GM12878 (cell line): ENCODE measurements at regions of chr1 and their contacts with region 1.

Region 1: GRCh38 chr1:113759333-113760101 is at the start of gene PHTF1:
- DNase-seq: no peak
- ATAC-seq: peak; percentile 91
- H3K4me3 ChIP-seq: peak within 1 kb of the TSS; percentile 85
- H3K27ac ChIP-seq: peak within 1 kb of the TSS; percentile 94
- H3K4me1 ChIP-seq: no peaks in the 10 kb centered on the region; the same call in 1 of the 2 replicates
- H3K27me3 ChIP-seq: no peaks in the 10 kb centered on the region
- CTCF ChIP-seq: no peak
- EP300 ChIP-seq: no peak
- POLR2A ChIP-seq: peak; percentile 89
- RAD21 ChIP-seq: no peak
- polyA plus RNA-seq, gene PHTF1: 7.8 to 12.6 TPM

Region 2: GRCh38 chr1:113701429-113701828 is 58.1 kb before region 1 on chr1:
- CTCF ChIA-PET with region 1: no interaction called
- POLR2A ChIA-PET with region 1: no interaction called
- RAD21 ChIA-PET with region 1: no interaction called
- SMC1A ChIA-PET with region 1: no interaction called
- in situ Hi-C with region 1: no loop called
- intact Hi-C with region 1: no loop called
- DNase-seq: no peak
- ATAC-seq: no peak
- H3K4me3 ChIP-seq: no peak overlapping the region
- H3K27ac ChIP-seq: no peak overlapping the region
- H3K4me1 ChIP-seq: no peaks in the 10 kb centered on the region
- H3K27me3 ChIP-seq: no peaks in the 10 kb centered on the region
- CTCF ChIP-seq: no peak
- EP300 ChIP-seq: no peak
- POLR2A ChIP-seq: no peak
- RAD21 ChIP-seq: no peak

Region 3: GRCh38 chr1:113714606-113715275 is 44.8 kb before region 1 on chr1:
- CTCF ChIA-PET with region 1: no interaction called
- POLR2A ChIA-PET with region 1: no interaction called
- RAD21 ChIA-PET with region 1: no interaction called
- SMC1A ChIA-PET with region 1: no interaction called
- in situ Hi-C with region 1: no loop called
- intact Hi-C with region 1: no loop called
- DNase-seq: no peak
- ATAC-seq: no peak
- H3K4me3 ChIP-seq: no peak overlapping the region
- H3K27ac ChIP-seq: no peak overlapping the region
- H3K4me1 ChIP-seq: no peaks in the 10 kb centered on the region
- H3K27me3 ChIP-seq: no peaks in the 10 kb centered on the region
- CTCF ChIP-seq: no peak
- EP300 ChIP-seq: no peak
- POLR2A ChIP-seq: no peak
- RAD21 ChIP-seq: no peak

Region 4: DNA sequence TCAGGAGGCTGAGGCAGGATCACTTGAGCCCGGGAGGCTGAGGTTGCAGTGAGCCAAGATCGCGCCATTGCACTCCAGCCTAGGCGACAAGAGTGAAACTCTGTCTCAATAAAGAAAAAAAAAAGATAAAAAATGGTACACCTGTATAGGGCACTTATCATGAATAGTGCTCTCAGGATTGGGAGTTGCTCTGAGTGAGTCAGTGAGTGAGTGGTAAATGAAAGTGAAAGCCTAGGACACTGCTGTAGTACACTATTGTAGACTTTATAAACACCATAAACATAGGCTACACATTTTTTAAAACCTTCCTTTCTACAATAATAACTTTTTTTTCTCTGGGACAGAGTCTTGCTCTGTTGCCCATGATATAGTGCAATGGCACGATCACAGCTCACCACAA is 17.0 kb before region 1 on chr1:
- CTCF ChIA-PET with region 1: interaction called, 6 read pairs
- POLR2A ChIA-PET with region 1: interaction called, 4 read pairs
- RAD21 ChIA-PET with region 1: interaction called, 5 read pairs
- SMC1A ChIA-PET with region 1: interaction called, 10 read pairs
- in situ Hi-C with region 1: no loop called
- intact Hi-C with region 1: no loop called
- DNase-seq: no peak
- ATAC-seq: peak; percentile 90
- H3K4me3 ChIP-seq: no peak overlapping the region
- H3K27ac ChIP-seq: no peak overlapping the region; the same call in 1 of the 2 replicates
- H3K4me1 ChIP-seq: peaks cover 3% of the 10 kb centered on the region; the same call in 1 of the 2 replicates
- H3K27me3 ChIP-seq: no peaks in the 10 kb centered on the region
- CTCF ChIP-seq: no peak
- EP300 ChIP-seq: no peak
- POLR2A ChIP-seq: no peak
- RAD21 ChIP-seq: no peak

Region 5: GRCh38 chr1:113793878-113794834 is 34.6 kb after region 1 on chr1:
- CTCF ChIA-PET with region 1: interaction called, 4 read pairs
- POLR2A ChIA-PET with region 1: interaction called, 8 read pairs
- RAD21 ChIA-PET with region 1: interaction called, 39 read pairs
- SMC1A ChIA-PET with region 1: interaction called, 17 read pairs
- in situ Hi-C with region 1: no loop called
- intact Hi-C with region 1: loop called (anchors 5 kb)
- DNase-seq: no peak
- ATAC-seq: peak; percentile 84
- H3K4me3 ChIP-seq: no peak overlapping the region
- H3K27ac ChIP-seq: no peak overlapping the region
- H3K4me1 ChIP-seq: peaks cover 10% of the 10 kb centered on the region
- H3K27me3 ChIP-seq: no peaks in the 10 kb centered on the region
- CTCF ChIP-seq: no peak
- EP300 ChIP-seq: 0 out of 4 replicates have a peak, but pooled peaks of 1 of the 2 experiments have one; percentile 23
- POLR2A ChIP-seq: no peak
- RAD21 ChIP-seq: no peak

Region 6: DNA sequence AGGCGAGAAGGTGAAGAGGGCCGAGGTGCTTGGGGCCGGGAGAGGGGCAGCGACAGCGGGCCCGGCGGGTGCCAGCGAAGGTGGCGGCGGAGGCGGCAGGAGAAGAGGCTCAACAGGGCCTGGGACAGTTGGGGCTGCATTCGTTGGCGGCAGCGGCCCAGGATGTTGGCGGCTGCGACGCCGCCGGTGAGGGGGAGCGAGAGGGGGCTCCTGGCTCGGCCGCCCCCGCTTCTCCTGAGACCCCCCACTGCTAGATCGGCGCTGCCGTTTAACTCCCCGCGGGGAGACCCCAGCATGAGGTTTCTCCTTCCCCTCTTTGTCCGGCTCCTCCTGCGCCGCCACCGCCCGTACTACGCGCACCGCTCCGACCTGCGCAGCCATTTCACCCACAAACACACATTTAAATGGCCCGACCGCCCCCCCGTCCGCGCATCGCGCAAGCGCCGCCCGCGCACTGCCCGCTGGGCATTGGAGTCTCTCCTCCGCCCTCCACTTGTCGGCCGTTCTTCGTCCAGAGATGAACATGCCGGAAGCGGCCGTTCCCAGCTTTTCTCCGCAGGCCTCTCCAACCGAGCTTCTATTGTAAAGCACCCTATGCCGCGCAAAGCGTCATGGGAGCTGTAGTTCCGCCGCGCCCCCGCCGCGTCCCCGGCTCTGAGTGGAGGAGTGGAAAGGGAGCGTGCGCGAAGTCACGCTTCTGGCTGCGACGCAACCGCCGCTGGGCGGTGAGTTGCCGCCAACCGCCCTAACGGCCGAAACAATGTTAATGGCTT is 52.6 kb after region 1 on chr1 and contains the start of gene RSBN1:
- CTCF ChIA-PET with region 1: interaction called, 7 read pairs
- POLR2A ChIA-PET with region 1: interaction called, 24 read pairs
- RAD21 ChIA-PET with region 1: interaction called, 55 read pairs
- SMC1A ChIA-PET with region 1: interaction called, 42 read pairs
- in situ Hi-C with region 1: no loop called
- intact Hi-C with region 1: loop called (anchors 2 kb)
- DNase-seq: peak; percentile 96
- ATAC-seq: peak; percentile 92
- H3K4me3 ChIP-seq: peak within 1 kb of the TSS; percentile 92
- H3K27ac ChIP-seq: peak within 1 kb of the TSS; percentile 72
- H3K4me1 ChIP-seq: no peaks in the 10 kb centered on the region
- H3K27me3 ChIP-seq: no peaks in the 10 kb centered on the region
- CTCF ChIP-seq: no peak
- EP300 ChIP-seq: peak in 1 of 2 experiments; percentile 80; a peak in 2 of 4 replicates
- POLR2A ChIP-seq: peak; percentile 96
- RAD21 ChIP-seq: no peak
- polyA plus RNA-seq, gene RSBN1: 2.9 to 10.5 TPM

Region 7: GRCh38 chr1:113826162-113826561 is 66.6 kb after region 1 on chr1:
- CTCF ChIA-PET with region 1: no interaction called
- POLR2A ChIA-PET with region 1: no interaction called
- RAD21 ChIA-PET with region 1: no interaction called
- SMC1A ChIA-PET with region 1: no interaction called
- in situ Hi-C with region 1: no loop called
- intact Hi-C with region 1: no loop called
- DNase-seq: no peak
- ATAC-seq: no peak
- H3K4me3 ChIP-seq: no peak overlapping the region
- H3K27ac ChIP-seq: no peak overlapping the region
- H3K4me1 ChIP-seq: no peaks in the 10 kb centered on the region
- H3K27me3 ChIP-seq: no peaks in the 10 kb centered on the region
- CTCF ChIP-seq: no peak
- EP300 ChIP-seq: no peak
- POLR2A ChIP-seq: no peak
- RAD21 ChIP-seq: no peak

Region 8: DNA sequence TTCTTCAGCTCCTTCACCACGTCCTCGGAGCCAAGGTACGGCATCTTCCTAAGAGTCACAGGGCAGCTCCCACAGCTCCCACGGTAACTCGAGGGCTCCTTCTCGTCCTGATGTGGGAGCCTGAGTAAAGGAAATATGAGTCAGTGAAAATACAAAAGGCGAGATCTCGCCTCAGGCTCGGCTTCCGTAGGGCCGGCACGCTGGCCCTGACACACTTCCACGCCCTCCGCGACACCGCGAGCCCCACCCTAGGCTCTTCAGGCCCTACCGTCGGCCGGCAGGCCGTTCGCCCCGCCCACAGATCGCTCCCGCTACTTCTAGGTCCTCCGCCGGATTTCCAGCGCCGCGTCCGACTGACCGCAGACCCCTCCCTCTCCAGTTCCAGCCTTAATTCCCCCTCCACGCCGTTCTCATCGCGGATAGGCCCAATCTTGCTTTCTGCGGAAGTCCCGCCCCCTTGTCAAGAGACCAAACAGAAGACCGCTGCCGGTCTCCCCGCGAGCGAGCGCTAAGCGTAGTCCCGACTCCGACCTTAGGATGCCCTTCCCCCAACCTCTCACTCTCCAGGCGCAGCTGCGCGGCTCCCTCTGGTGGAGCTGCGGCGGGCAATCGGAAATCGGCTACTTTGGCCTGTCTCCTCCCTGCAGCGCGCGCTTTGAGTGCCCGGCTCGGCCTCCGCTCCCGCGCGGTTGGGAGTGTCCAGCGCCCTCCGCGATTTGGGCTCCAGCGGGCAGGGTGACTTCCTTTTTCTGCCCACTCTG is 145.3 kb after region 1 on chr1 and contains the starts of genes AP4B1 and DCLRE1B:
- CTCF ChIA-PET with region 1: no interaction called
- POLR2A ChIA-PET with region 1: interaction called, 3 read pairs
- RAD21 ChIA-PET with region 1: interaction called, 5 read pairs
- SMC1A ChIA-PET with region 1: interaction called, 9 read pairs
- in situ Hi-C with region 1: no loop called
- intact Hi-C with region 1: loop called (anchors 10 kb)
- DNase-seq: peak; percentile 99
- ATAC-seq: peak; percentile 94
- H3K4me3 ChIP-seq: peak within 1 kb of the TSS; percentile 91
- H3K27ac ChIP-seq: peak within 1 kb of the TSS; percentile 88
- H3K4me1 ChIP-seq: peaks cover 3% of the 10 kb centered on the region
- H3K27me3 ChIP-seq: no peaks in the 10 kb centered on the region
- CTCF ChIP-seq: peak; percentile 63 to 98 (median 67)
- EP300 ChIP-seq: peak in 1 of 2 experiments; percentile 69; a peak in 1 of 4 replicates
- POLR2A ChIP-seq: peak; percentile 77
- RAD21 ChIP-seq: peak; percentile 93
- polyA plus RNA-seq, gene AP4B1: 27.2 to 29.0 TPM
- polyA plus RNA-seq, gene DCLRE1B: 5.4 to 7.4 TPM